A549 (cell line): ENCODE measurements at regions of chr16 and their contacts with region 1.

Region 1: GRCh38 chr16:18969050-18969854 is 14.5 kb upstream of the TMC7 start:
- DNase-seq: peak; percentile 75 to 94
- ATAC-seq: peak; percentile 97 to 99
- H3K4me3 ChIP-seq: peak overlapping the region; percentile 34; the same call in 2 of the 3 replicates
- H3K27ac ChIP-seq: 0 out of 6 replicates have a peak overlapping the region, but pooled peaks of 1 of the 2 experiments have one; percentile 6
- H3K4me1 ChIP-seq: 0 out of 3 replicates have a peak, but pooled peaks cover 4% of the 10 kb centered on the region
- CTCF ChIP-seq: peak; percentile 92
- EP300 ChIP-seq: no peak
- POLR2A ChIP-seq: no peak
- RAD21 ChIP-seq: peak; percentile 91 to 93

Region 2: GRCh38 chr16:18846416-18846815 is 122.8 kb before region 1 on chr16:
- CTCF ChIA-PET with region 1: interaction called, 13 read pairs
- POLR2A ChIA-PET with region 1: no interaction called
- DNase-seq: no peak
- ATAC-seq: no peak
- H3K4me3 ChIP-seq: no peak overlapping the region
- H3K27ac ChIP-seq: no peak overlapping the region
- H3K4me1 ChIP-seq: no peaks in the 10 kb centered on the region
- CTCF ChIP-seq: no peak
- EP300 ChIP-seq: no peak
- POLR2A ChIP-seq: no peak
- RAD21 ChIP-seq: no peak

Region 3: GRCh38 chr16:18945233-18945632 is 24.0 kb before region 1 on chr16:
- CTCF ChIA-PET with region 1: interaction called, 28 read pairs
- POLR2A ChIA-PET with region 1: no interaction called
- DNase-seq: no peak
- ATAC-seq: no peak
- H3K4me3 ChIP-seq: no peak overlapping the region; the same call in 2 of the 3 replicates
- H3K27ac ChIP-seq: peak overlapping the region in 1 of 2 experiments; percentile 87; a peak in 2 of 6 replicates
- H3K4me1 ChIP-seq: 0 out of 3 replicates have a peak, but pooled peaks cover 3% of the 10 kb centered on the region
- CTCF ChIP-seq: no peak
- EP300 ChIP-seq: no peak
- POLR2A ChIP-seq: no peak
- RAD21 ChIP-seq: no peak

Region 4: GRCh38 chr16:18959031-18959505 is 10.2 kb before region 1 on chr16:
- CTCF ChIA-PET with region 1: interaction called, 26 read pairs
- POLR2A ChIA-PET with region 1: no interaction called
- DNase-seq: no peak
- ATAC-seq: peak in 1 of 2 experiments; percentile 24; a peak in 2 of 6 replicates
- H3K4me3 ChIP-seq: no peak overlapping the region
- H3K27ac ChIP-seq: no peak overlapping the region
- H3K4me1 ChIP-seq: no peaks in the 10 kb centered on the region
- CTCF ChIP-seq: no peak
- EP300 ChIP-seq: no peak
- POLR2A ChIP-seq: no peak
- RAD21 ChIP-seq: no peak